Mammary epithelial cell (primary cell): ENCODE measurements at regions of chr16 and their contacts with region 1.

Region 1: GRCh38 chr16:2980227-2981086 is at the start of gene PKMYT1:
- DNase-seq: peak; percentile 85
- H3K4me3 ChIP-seq: peak within 1 kb of the TSS; percentile 64 to 98 (median 84)
- H3K27ac ChIP-seq: peak within 1 kb of the TSS; percentile 48
- H3K4me1 ChIP-seq: peaks cover 27% of the 10 kb centered on the region
- H3K27me3 ChIP-seq: no peaks in the 10 kb centered on the region
- CTCF ChIP-seq: no peak
- total RNA-seq, gene PKMYT1: 4.2 to 67.2 TPM

Region 2: GRCh38 chr16:2673066-2673999 is 307.1 kb before region 1 on chr16:
- CTCF ChIA-PET with region 1: no interaction called
- dilution Hi-C with region 1: no loop called
- in situ Hi-C with region 1: no loop called
- intact Hi-C with region 1: loop called (anchors 5 kb)
- DNase-seq: peak; percentile 93
- H3K4me3 ChIP-seq: peak overlapping the region; percentile 75
- H3K27ac ChIP-seq: no peak overlapping the region
- H3K4me1 ChIP-seq: peaks cover 9% of the 10 kb centered on the region
- H3K27me3 ChIP-seq: no peaks in the 10 kb centered on the region
- CTCF ChIP-seq: no peak

Region 3: DNA sequence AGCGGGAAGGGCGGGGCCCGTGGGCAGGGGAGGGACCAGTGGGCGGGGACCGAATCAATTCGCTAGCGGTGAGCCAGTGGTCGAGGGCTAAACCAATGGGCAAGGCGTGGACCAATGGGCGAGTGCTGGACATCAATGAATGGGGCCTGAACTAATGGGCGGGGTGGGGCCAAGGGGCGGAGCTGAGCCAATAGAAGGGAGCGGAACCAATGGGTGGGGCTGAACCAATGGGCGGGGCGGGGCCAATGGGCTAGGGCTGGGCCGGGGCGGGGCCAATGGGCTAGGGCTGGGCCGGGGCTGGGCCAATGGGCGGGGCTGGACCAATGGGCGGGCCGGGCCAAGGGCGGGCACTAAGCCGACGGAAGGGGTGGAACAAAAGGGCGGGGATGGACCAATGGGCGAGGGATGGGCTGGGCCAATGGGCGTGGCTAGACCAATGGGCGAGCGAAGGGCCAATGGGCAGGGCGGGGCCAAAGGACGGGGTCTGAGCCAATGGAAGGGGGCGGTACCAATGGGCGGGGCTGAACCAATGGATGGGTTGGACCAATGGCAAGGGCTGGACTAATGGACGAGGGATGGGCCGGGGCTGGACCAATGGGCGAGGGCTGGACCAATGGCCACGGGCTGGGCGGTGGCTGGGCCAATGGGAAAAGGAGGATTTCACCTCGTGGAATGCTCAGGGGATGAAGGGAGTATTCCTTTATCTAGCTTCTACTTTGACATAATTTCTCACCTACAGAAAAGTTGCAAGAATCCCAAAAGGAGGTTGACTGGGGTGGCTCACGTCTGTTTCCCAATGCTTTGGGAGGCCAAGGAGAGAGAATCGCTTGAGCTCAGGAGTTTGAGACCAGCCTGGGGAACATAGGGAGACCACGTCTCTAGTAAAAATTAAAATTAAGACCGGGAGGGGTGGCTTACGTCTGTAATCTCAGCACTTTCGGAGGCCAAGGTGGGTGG is 74.7 kb before region 1 on chr16:
- CTCF ChIA-PET with region 1: no interaction called
- dilution Hi-C with region 1: no loop called
- in situ Hi-C with region 1: no loop called
- intact Hi-C with region 1: loop called (anchors 2 kb)
- DNase-seq: peak; percentile 99
- H3K4me3 ChIP-seq: peak overlapping the region; percentile 82 to 94 (median 94)
- H3K27ac ChIP-seq: no peak overlapping the region
- H3K4me1 ChIP-seq: peaks cover 14% of the 10 kb centered on the region
- H3K27me3 ChIP-seq: no peaks in the 10 kb centered on the region
- CTCF ChIP-seq: no peak

Region 4: GRCh38 chr16:2964475-2965336 is 15.8 kb before region 1 on chr16:
- CTCF ChIA-PET with region 1: no interaction called
- dilution Hi-C with region 1: no loop called
- in situ Hi-C with region 1: no loop called
- intact Hi-C with region 1: loop called (anchors 1 kb)
- DNase-seq: peak; percentile 70
- H3K4me3 ChIP-seq: peak overlapping the region; percentile 37 to 53 (median 53)
- H3K27ac ChIP-seq: no peak overlapping the region
- H3K4me1 ChIP-seq: peaks cover 46% of the 10 kb centered on the region
- H3K27me3 ChIP-seq: no peaks in the 10 kb centered on the region
- CTCF ChIP-seq: no peak

Region 5: GRCh38 chr16:3023669-3024478 is 43.4 kb after region 1 on chr16 and contains the starts of genes HCFC1R1 and THOC6:
- CTCF ChIA-PET with region 1: no interaction called
- dilution Hi-C with region 1: no loop called
- in situ Hi-C with region 1: no loop called
- intact Hi-C with region 1: loop called (anchors 1 kb)
- DNase-seq: peak; percentile 98
- H3K4me3 ChIP-seq: peak within 1 kb of the TSS; percentile 60 to 97 (median 90)
- H3K27ac ChIP-seq: peak within 1 kb of the TSS; percentile 97
- H3K4me1 ChIP-seq: peaks cover 26% of the 10 kb centered on the region
- H3K27me3 ChIP-seq: no peaks in the 10 kb centered on the region
- CTCF ChIP-seq: no peak
- total RNA-seq, gene HCFC1R1: 2.2 to 20.4 TPM
- total RNA-seq, gene THOC6: 8.3 to 26.8 TPM